ENCODE measurements at regions of chr6 and their contacts with region 1.

Region 1: DNA sequence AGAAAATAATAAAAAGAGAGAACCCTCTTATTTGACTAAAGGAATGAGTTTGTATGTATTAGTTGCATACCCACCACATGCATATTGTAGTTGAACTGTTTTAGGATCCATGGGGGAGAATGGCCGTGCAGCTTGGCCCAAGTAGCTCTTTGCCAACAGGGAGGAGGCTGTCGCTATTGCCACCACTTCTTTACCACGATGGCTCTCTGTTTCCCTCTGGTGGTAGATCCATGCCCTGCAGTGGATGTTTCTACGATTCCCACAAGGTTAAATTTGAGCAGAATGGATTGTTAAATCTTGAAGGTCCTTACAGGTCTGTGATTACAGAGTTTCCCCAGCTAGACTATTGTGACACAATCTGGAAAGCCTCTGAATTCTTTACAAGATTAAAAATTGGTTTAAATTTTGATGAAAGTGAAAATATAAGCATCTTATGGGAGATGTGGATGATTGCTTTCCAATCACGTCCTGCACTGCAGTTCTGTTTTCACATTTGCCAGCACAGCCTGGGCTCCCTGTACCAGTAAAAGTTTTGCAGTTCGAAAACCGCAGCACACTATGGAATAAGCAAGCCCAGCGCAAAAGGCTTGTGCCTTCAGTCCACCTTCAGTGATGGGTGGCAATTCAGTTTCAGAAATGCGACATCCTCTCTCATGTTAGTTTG is 34.4 kb upstream of the FNDC1 start:
- DNase-seq: peak; percentile 73
- H3K4me3 Mint-ChIP-seq: no peak overlapping the region
- H3K27ac Mint-ChIP-seq: no peak overlapping the region
- H3K4me1 Mint-ChIP-seq: peaks cover 5% of the 10 kb centered on the region
- H3K27me3 Mint-ChIP-seq: peaks cover 42% of the 10 kb centered on the region
- CTCF ChIP-seq: peak; percentile 95

Region 2: GRCh38 chr6:158999666-159000403 is 135.0 kb before region 1 on chr6 and contains the start of gene RSPH3:
- CTCF ChIA-PET with region 1: interaction called, 33 read pairs
- POLR2A ChIA-PET with region 1: interaction called, 3 read pairs
- intact Hi-C with region 1: no loop called
- DNase-seq: peak; percentile 96
- H3K4me3 Mint-ChIP-seq: peak within 1 kb of the TSS; percentile 100
- H3K27ac Mint-ChIP-seq: peak within 1 kb of the TSS; percentile 84
- H3K4me1 Mint-ChIP-seq: peaks cover 21% of the 10 kb centered on the region
- H3K27me3 Mint-ChIP-seq: no peaks in the 10 kb centered on the region
- CTCF ChIP-seq: no peak
- total RNA-seq, gene RSPH3: 13.1 and 14.5 TPM in 2 replicates

Region 3: DNA sequence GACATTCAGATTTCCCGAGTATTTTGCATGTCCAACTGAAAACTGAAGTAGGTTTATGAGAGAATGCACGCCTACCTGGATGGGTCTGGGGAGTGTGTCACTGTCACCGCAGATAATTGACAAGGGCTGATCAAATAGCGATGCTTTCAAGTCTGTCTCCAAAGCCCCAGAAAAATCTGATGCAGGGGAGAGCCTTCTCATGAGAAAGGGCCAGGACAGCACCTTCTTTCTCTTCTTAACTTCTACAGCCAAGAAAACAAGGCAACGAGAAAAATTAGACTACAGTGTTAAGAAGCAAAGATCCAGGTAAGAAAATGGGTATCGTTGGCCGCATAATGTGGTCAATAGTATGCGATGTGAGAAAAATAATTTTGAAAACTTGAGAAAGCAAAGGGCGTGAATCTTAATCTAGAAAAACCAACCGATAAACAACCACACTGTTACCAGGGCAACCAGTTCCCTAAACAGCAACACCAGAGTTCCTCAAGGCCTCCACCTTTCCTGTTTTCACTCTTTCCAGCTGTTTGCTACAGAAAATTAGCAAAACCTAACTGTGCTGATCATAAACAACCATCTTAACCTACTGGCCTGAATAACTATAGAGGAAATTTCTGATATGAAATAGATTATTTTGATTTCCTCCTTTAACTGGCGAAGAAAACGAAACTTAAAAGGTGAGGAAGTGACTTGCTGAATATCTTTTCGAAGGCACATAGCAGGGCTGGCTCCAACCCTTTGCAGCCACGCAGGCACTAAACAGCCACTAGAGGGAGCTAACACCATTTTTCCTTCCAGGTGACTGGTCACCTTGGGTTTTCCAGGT is 92.6 kb before region 1 on chr6:
- CTCF ChIA-PET with region 1: interaction called, 128 read pairs
- POLR2A ChIA-PET with region 1: interaction called, 7 read pairs
- intact Hi-C with region 1: loop called (anchors 1 kb)
- DNase-seq: peak; percentile 85
- H3K4me3 Mint-ChIP-seq: no peak overlapping the region
- H3K27ac Mint-ChIP-seq: no peak overlapping the region
- H3K4me1 Mint-ChIP-seq: peaks cover 21% of the 10 kb centered on the region
- H3K27me3 Mint-ChIP-seq: peaks cover 19% of the 10 kb centered on the region
- CTCF ChIP-seq: peak; percentile 81

Region 4: GRCh38 chr6:159104163-159104925 is 30.5 kb before region 1 on chr6:
- CTCF ChIA-PET with region 1: interaction called, 38 read pairs
- POLR2A ChIA-PET with region 1: interaction called, 3 read pairs
- intact Hi-C with region 1: loop called (anchors 1 kb)
- DNase-seq: peak; percentile 61
- H3K4me3 Mint-ChIP-seq: no peak overlapping the region
- H3K27ac Mint-ChIP-seq: no peak overlapping the region
- H3K4me1 Mint-ChIP-seq: peaks cover 6% of the 10 kb centered on the region
- H3K27me3 Mint-ChIP-seq: peaks cover 16% of the 10 kb centered on the region
- CTCF ChIP-seq: peak; percentile 93

Region 5: GRCh38 chr6:159116343-159116742 is 18.5 kb before region 1 on chr6:
- CTCF ChIA-PET with region 1: interaction called, 14 read pairs
- POLR2A ChIA-PET with region 1: no interaction called
- intact Hi-C with region 1: no loop called
- DNase-seq: no peak
- H3K4me3 Mint-ChIP-seq: no peak overlapping the region
- H3K27ac Mint-ChIP-seq: no peak overlapping the region
- H3K4me1 Mint-ChIP-seq: no peaks in the 10 kb centered on the region
- H3K27me3 Mint-ChIP-seq: no peaks in the 10 kb centered on the region
- CTCF ChIP-seq: no peak

Measured in MCF 10A (cell line).